WTC11 (cell line): ENCODE measurements at regions of chr19 and their contacts with region 1.

Region 1: DNA sequence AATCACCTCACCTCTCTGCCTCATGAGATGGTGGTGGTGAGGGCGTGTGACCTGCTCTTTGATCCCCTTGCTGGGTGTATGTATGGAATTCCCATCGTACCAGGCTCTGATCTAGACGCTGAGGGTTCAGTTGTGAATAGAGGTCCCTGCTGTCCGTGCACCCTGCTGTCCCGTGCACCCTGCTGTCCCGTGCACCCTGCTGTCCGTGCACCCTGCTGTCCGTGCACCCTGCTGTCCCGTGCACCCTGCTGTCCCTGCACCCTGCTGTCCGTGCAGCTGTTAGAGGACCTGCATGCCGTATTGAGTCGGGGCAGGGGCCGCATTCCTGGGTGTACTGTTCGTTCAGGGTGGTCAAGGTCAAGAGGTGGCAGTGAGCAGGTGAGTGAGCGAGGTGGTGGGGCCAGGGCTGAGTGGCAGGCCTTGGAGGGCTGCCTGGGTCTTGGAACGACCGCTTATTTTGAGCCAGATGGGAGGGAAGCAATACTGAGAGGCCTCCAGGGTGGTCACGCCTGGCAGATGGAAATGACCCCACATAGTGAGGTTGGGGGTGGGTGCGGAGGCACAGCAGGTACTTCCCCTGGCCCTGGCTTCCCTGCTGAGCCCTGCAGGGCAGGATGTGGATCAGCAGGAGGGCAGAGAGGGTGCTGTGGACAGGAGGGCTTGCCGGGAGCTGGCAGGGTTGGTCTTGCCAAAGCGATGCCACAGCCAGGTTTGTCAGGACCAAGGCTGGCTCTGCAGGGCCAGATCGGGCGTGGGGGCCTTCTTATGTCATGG is 4.6 kb upstream of the EPN1 start:
- DNase-seq: peak; percentile 31
- ATAC-seq: no peak
- H3K4me3 Mint-ChIP-seq: no peak overlapping the region
- H3K27ac Mint-ChIP-seq: peak overlapping the region; percentile 73
- H3K4me1 Mint-ChIP-seq: peaks cover 32% of the 10 kb centered on the region
- H3K27me3 Mint-ChIP-seq: no peaks in the 10 kb centered on the region
- CTCF ChIP-seq: no peak

Region 2: GRCh38 chr19:55643348-55644176 is 26.9 kb before region 1 on chr19 and contains the start of gene ZNF581:
- CTCF ChIA-PET with region 1: interaction called, 25 read pairs
- POLR2A ChIA-PET with region 1: interaction called, 6 read pairs
- DNase-seq: peak; percentile 72
- ATAC-seq: peak; percentile 9
- H3K4me3 Mint-ChIP-seq: peak within 1 kb of the TSS; percentile 89
- H3K27ac Mint-ChIP-seq: peak within 1 kb of the TSS; percentile 93
- H3K4me1 Mint-ChIP-seq: peaks cover 26% of the 10 kb centered on the region
- H3K27me3 Mint-ChIP-seq: peaks cover 9% of the 10 kb centered on the region
- CTCF ChIP-seq: no peak
- total RNA-seq, gene ZNF581: 94.6 to 100 TPM (median 99.5 TPM) in 3 replicates